ENCODE measurements at regions of chr9 and their contacts with region 1.

Region 1: GRCh38 chr9:79000230-79001002 is 571.3 kb upstream of the TLE4 start:
- DNase-seq: no peak
- ATAC-seq: peak; percentile 27
- H3K4me3 ChIP-seq: no peak overlapping the region
- H3K27ac ChIP-seq: no peak overlapping the region; the same call in 1 of the 2 replicates
- H3K4me1 ChIP-seq: no peaks in the 10 kb centered on the region
- H3K27me3 ChIP-seq: no peaks in the 10 kb centered on the region
- CTCF ChIP-seq: no peak
- EP300 ChIP-seq: no peak
- POLR2A ChIP-seq: no peak
- RAD21 ChIP-seq: no peak

Region 2: GRCh38 chr9:78985084-78985738 is 15.2 kb before region 1 on chr9:
- CTCF ChIA-PET with region 1: no interaction called
- POLR2A ChIA-PET with region 1: no interaction called
- RAD21 ChIA-PET with region 1: no interaction called
- SMC1A ChIA-PET with region 1: no interaction called
- in situ Hi-C with region 1: no loop called
- intact Hi-C with region 1: loop called (anchors 1 kb)
- DNase-seq: no peak
- ATAC-seq: no peak
- H3K4me3 ChIP-seq: no peak overlapping the region
- H3K27ac ChIP-seq: no peak overlapping the region
- H3K4me1 ChIP-seq: no peaks in the 10 kb centered on the region
- H3K27me3 ChIP-seq: no peaks in the 10 kb centered on the region
- CTCF ChIP-seq: no peak
- EP300 ChIP-seq: no peak
- POLR2A ChIP-seq: no peak
- RAD21 ChIP-seq: no peak

Measured in GM12878 (cell line).